BJ (cell line): ENCODE measurements at regions of chr5 and their contacts with region 1.

Region 1: DNA sequence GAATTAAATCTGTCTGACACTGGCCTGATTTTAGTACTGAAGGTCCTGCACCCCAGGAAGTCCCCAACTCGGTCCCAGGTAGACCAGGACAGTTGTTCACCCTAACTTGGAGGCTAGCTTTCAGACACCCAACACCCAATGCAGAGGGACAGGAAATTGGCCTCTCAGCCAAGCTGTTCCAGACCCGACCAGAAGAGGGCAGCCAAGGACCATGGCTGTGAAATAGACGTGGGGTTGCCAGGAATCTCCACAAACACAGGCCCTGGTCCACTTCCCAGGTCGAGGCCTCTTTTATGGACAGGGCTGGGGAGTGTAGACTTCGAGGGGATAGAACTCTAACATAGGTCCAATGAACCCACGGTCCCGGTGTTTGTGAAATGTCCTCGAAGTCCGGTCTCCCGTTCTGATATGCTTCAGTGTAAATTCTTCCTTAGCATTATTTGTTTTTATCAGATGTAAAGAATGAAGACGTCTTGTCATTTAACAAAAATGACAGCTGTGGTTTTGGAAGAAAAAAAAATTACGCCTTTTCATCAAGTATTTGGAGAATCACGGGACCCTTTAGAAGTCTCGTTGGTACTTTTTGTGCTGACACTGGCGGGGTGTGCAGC is 260.3 kb upstream of the ADAMTS16 start:
- DNase-seq: peak; percentile 9
- H3K4me3 ChIP-seq: no peak overlapping the region
- H3K27me3 ChIP-seq: no peaks in the 10 kb centered on the region
- CTCF ChIP-seq: peak; percentile 99

Region 2: GRCh38 chr5:4868109-4868735 is 11.6 kb before region 1 on chr5:
- CTCF ChIA-PET with region 1: interaction called, 10 read pairs
- POLR2A ChIA-PET with region 1: no interaction called
- DNase-seq: no peak
- H3K4me3 ChIP-seq: no peak overlapping the region
- H3K27me3 ChIP-seq: no peaks in the 10 kb centered on the region
- CTCF ChIP-seq: peak; percentile 85

Region 3: DNA sequence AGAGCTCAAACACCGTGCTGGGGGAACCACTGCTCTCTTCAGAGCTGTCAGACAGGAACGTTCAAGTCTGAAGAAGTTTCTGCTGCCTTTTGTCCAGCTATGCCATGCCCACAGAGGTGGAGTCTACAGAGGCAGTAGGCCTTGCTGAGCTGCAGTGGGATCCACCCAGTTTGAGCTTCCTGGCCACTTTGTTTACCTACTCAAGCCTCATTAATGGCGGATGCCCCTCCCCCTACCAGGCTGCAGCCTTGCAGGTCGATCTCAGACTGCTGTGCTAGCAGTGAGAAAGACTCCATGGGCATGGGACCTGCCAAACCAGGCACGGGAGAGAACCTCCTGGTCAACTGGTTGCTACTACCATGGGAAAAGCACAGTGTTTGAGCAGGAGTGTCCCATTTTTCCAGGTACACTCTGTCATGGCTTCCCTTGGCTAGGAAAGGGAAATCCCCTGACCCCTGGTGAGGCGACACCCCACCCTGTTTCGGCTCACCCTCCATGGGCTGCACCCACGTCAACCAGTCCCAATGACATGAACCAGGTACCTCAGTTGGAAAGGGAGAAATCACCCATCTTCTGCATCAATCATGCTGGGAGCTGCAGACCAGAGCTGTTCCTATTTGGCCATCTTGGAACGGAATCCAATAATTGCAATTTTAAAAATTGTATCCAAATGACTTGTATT is 13.4 kb after region 1 on chr5:
- CTCF ChIA-PET with region 1: interaction called, 10 read pairs
- POLR2A ChIA-PET with region 1: no interaction called
- DNase-seq: no peak
- H3K4me3 ChIP-seq: no peak overlapping the region
- H3K27me3 ChIP-seq: no peaks in the 10 kb centered on the region
- CTCF ChIP-seq: no peak

Region 4: GRCh38 chr5:4947893-4948536 is 68.2 kb after region 1 on chr5:
- CTCF ChIA-PET with region 1: interaction called, 12 read pairs
- POLR2A ChIA-PET with region 1: no interaction called
- DNase-seq: no peak
- H3K4me3 ChIP-seq: no peak overlapping the region
- H3K27me3 ChIP-seq: no peaks in the 10 kb centered on the region
- CTCF ChIP-seq: no peak

Region 5: DNA sequence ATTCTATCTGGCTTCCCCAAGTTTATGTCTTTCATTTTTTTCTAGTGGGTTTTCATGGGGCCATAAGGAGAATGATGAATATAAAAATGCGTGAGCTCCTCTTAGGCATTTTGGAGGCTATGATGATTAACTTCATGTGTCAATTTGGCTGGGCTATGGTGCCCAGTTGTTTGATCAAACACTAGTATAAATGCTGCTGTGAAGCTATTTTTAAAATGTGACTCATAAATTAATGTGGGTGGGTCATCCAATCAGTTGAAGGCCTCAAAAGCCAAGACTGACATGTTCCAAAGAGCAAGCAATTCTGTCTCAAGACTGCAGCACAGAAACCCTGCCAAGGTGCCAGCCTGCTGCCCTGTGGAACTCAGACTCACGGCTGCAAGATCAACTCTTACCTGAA is 518.2 kb after region 1 on chr5:
- CTCF ChIA-PET with region 1: interaction called, 25 read pairs
- POLR2A ChIA-PET with region 1: no interaction called
- DNase-seq: no peak
- H3K4me3 ChIP-seq: no peak overlapping the region
- H3K27me3 ChIP-seq: no peaks in the 10 kb centered on the region
- CTCF ChIP-seq: no peak

Region 6: DNA sequence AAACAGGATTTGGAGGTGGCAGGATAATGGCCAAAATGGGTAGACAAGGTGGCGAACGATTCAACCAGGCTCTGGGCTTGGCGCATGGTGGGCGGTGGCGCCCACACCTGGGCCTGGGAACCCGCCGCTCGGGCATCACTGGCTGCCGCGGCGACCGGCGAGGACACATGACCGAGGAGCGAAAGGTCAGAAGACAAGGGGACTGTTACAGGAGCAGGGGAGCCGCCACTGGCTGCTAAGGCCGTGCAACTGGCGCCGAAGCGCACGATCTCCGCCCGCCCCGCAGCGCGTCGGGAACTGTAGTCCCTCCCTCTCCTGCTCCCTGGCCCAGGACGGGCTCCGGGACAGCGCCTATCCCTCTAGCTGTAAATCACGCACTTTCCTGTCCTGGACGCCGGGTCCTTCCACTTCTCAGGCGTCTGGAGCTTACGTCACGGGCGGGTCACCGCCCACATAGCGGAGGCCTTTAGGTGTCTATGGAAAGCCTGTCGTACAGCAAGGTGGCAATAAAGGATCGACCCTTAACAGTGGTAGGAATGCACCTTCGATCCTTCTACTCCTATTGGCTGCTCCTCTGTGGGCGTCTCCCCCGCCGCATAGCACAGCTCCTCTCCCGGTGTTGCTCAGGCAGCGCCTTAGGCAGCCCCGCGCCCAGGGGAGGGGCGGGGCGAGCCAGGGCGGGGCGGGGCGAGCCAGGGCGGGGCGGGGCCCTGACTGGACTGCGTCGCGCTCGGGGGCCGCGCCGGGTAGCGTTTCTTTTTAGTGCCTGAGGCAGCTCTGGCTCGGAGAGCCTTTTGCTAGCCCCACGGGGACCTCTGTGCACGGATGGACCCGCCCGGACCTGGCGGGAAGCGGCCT is 542.4 kb after region 1 on chr5 and contains the start of gene ICE1:
- CTCF ChIA-PET with region 1: interaction called, 76 read pairs
- POLR2A ChIA-PET with region 1: no interaction called
- DNase-seq: peak; percentile 73
- H3K4me3 ChIP-seq: peak within 1 kb of the TSS; percentile 57
- H3K27me3 ChIP-seq: no peaks in the 10 kb centered on the region
- CTCF ChIP-seq: peak; percentile 11; the same call in 1 of the 2 replicates
- polyA plus RNA-seq, gene ICE1: 10.2 and 15.1 TPM in 2 replicates